ENCODE measurements at regions of chr3 and their contacts with region 1.

Region 1: GRCh38 chr3:131658108-131658507 is 155.3 kb upstream of the MRPL3 start:
- DNase-seq: peak; percentile 4
- ATAC-seq: peak; percentile 60
- H3K4me3 ChIP-seq: no peak overlapping the region
- H3K27ac ChIP-seq: no peak overlapping the region
- H3K4me1 ChIP-seq: no peaks in the 10 kb centered on the region
- H3K27me3 ChIP-seq: no peaks in the 10 kb centered on the region
- CTCF ChIP-seq: peak; percentile 44
- EP300 ChIP-seq: no peak
- POLR2A ChIP-seq: no peak
- RAD21 ChIP-seq: no peak

Region 2: GRCh38 chr3:131549340-131549739 is 108.8 kb before region 1 on chr3:
- CTCF ChIA-PET with region 1: no interaction called
- POLR2A ChIA-PET with region 1: no interaction called
- in situ Hi-C with region 1: no loop called
- intact Hi-C with region 1: no loop called
- DNase-seq: no peak
- ATAC-seq: no peak
- H3K4me3 ChIP-seq: no peak overlapping the region
- H3K27ac ChIP-seq: no peak overlapping the region
- H3K4me1 ChIP-seq: no peaks in the 10 kb centered on the region
- H3K27me3 ChIP-seq: no peaks in the 10 kb centered on the region
- CTCF ChIP-seq: peak; percentile 35
- EP300 ChIP-seq: no peak
- POLR2A ChIP-seq: no peak
- RAD21 ChIP-seq: no peak

Region 3: GRCh38 chr3:131669590-131669989 is 11.5 kb after region 1 on chr3:
- CTCF ChIA-PET with region 1: no interaction called
- POLR2A ChIA-PET with region 1: no interaction called
- in situ Hi-C with region 1: no loop called
- intact Hi-C with region 1: loop called (anchors 1 kb)
- DNase-seq: no peak
- ATAC-seq: no peak
- H3K4me3 ChIP-seq: no peak overlapping the region
- H3K27ac ChIP-seq: no peak overlapping the region
- H3K4me1 ChIP-seq: no peaks in the 10 kb centered on the region
- H3K27me3 ChIP-seq: no peaks in the 10 kb centered on the region
- CTCF ChIP-seq: no peak
- EP300 ChIP-seq: no peak
- POLR2A ChIP-seq: no peak
- RAD21 ChIP-seq: no peak

Region 4: DNA sequence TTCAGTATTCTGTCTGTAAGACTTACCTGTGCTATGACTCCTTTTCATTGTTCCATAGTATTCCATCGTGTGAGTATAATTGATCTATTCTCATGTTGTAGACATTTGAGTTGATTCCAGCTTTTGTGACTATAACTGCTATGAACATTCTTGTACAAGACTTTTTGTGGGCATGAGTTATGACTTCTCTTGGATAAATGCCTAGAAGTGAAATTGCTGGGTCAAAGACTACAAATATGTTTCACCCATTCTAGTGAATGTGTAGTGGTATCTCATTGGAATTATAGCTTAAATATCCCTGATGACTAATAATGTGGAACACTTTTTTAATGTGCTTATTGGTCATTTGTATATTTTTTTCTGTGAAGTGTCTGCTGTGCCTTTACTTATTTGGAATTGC is 1091.7 kb after region 1 on chr3:
- CTCF ChIA-PET with region 1: no interaction called
- POLR2A ChIA-PET with region 1: no interaction called
- in situ Hi-C with region 1: no loop called
- intact Hi-C with region 1: no loop called
- DNase-seq: no peak
- ATAC-seq: no peak
- H3K4me3 ChIP-seq: no peak overlapping the region
- H3K27ac ChIP-seq: no peak overlapping the region
- H3K4me1 ChIP-seq: peaks cover 5% of the 10 kb centered on the region
- H3K27me3 ChIP-seq: no peaks in the 10 kb centered on the region
- CTCF ChIP-seq: no peak
- EP300 ChIP-seq: no peak
- POLR2A ChIP-seq: no peak
- RAD21 ChIP-seq: no peak